HCT116 (cell line): ENCODE measurements at regions of chr2 and their contacts with region 1.

Region 1: DNA sequence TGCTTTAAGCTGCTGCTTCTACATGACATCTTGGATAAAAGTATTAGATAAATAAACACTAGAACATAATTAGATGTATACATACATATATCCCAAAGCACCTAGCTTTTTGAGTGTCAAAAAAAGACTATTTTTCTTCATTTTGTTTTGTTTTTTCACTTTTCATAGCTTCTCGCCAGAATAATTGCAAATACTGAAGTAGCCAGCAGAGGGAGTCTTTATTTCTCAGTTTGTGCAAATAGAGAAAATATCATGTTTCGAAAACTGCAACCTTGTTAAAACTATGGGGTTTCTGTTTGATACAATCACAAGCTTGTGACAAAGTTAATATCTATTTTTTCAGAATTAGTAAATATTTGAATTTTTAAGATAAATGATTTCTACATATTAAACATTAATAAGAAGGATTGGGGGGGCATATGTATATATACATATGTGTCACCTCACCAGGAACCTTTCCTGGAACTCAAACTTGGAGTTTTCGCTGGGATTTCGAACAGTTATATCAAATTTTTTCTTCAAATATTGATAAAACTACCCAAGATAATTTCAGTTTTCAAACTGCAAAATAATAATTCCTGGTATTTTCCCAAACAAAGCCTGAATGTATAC is 61.0 kb downstream of the GRB14 start:
- DNase-seq: peak; percentile 4
- ATAC-seq: no peak
- H3K4me3 ChIP-seq: no peak overlapping the region
- H3K27ac ChIP-seq: no peak overlapping the region
- H3K4me1 ChIP-seq: no peaks in the 10 kb centered on the region
- H3K27me3 ChIP-seq: no peaks in the 10 kb centered on the region
- CTCF ChIP-seq: peak; percentile 58 to 76 (median 75)
- POLR2A ChIP-seq: no peak
- RAD21 ChIP-seq: peak; percentile 47

Region 2: DNA sequence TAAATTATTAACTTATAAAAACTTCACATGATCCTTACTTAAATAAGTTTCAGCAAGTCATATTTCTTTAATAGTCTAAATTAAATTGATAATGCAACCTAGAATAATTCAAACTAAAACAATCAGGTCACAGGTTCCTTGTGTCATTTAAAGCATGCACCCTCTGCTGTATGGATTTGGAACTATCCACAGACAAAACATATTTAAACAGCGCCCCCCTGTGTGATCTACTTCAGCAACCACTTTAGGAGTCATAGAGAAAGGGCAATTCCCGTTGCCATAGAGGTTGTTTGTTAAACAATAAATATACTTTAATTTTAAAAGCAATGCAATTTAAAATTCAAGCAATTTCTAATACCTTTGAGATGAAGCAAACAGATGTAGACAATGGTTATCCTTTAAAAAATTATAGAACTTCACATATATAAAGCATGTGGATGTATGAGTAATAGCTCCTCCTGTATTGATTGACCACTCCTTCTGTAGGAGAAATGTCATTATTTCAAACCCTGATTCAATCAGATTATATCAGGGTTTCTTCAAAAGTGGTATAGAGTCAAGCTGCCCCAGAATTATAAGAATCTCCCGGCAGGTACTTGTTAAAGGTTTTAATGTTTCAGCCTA is 39.8 kb after region 1 on chr2:
- CTCF ChIA-PET with region 1: interaction called, 16 read pairs
- POLR2A ChIA-PET with region 1: no interaction called
- RAD21 ChIA-PET with region 1: no interaction called
- intact Hi-C with region 1: no loop called
- DNase-seq: peak; percentile 79
- ATAC-seq: peak; percentile 99
- H3K4me3 ChIP-seq: no peak overlapping the region
- H3K27ac ChIP-seq: no peak overlapping the region
- H3K4me1 ChIP-seq: no peaks in the 10 kb centered on the region
- H3K27me3 ChIP-seq: no peaks in the 10 kb centered on the region
- CTCF ChIP-seq: peak; percentile 87 to 99 (median 92)
- POLR2A ChIP-seq: no peak
- RAD21 ChIP-seq: peak; percentile 70

Region 3: DNA sequence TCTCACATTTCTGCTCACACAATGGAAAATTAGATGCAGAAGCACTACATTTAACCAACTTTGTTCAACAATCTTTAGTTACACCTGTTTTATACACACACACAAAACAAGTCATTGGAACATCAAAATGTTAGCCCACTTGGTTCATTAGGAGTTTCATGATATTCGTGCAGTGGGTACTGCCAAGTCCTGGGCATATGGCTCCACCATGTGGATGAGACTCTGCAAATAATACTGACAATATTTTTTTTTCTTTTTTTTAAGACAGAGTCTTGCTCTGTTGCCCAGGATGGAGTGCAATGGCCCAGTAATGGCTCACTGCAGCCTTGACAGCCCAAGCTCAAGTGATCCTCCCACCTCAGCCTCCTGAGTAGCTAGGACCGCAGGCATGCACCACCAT is 95.5 kb after region 1 on chr2:
- CTCF ChIA-PET with region 1: interaction called, 3 read pairs
- POLR2A ChIA-PET with region 1: no interaction called
- RAD21 ChIA-PET with region 1: no interaction called
- intact Hi-C with region 1: loop called (anchors 1 kb)
- DNase-seq: no peak
- ATAC-seq: peak; percentile 66
- H3K4me3 ChIP-seq: no peak overlapping the region
- H3K27ac ChIP-seq: no peak overlapping the region
- H3K4me1 ChIP-seq: no peaks in the 10 kb centered on the region; a peak in 1 of 4 replicates
- H3K27me3 ChIP-seq: no peaks in the 10 kb centered on the region
- CTCF ChIP-seq: peak in 2 of 3 experiments; percentile 13 to 26; a peak in 3 of 6 replicates
- POLR2A ChIP-seq: no peak
- RAD21 ChIP-seq: peak; percentile 56

Region 4: DNA sequence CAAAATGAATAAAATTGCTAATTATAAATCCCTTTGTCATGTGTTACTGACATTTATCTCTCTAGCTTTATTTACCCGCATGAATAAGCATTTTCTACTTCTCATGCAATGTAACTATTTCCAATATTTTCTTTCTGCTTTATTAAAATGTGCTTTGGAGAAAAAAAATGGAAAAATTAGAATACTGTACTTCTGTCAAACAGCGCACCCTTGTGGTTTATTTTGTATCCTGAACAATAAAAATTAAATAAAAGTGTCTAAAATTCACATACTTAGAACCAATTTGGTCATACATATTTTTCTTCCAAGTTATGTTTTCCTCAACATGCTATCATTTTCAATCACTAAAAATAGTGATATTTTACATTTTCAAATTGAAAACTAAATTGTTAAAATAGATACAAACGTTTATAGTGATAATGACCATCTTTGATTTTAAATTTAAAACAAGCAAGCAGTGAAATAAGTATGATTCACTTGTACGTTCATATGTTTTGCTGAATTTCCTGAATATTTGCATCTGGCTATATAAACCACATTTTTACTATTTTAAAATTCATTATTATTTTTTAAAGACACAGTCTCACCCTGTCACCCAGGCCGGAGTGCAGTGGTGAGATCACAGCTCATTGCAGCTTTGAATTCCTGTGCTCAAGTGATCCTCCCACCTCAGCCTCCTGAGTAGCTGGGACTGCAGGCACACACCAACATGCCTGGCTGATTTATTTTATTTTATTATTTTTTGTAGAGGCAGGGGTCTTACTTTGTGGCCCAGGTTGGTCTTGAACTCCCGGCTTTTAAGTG is 156.9 kb after region 1 on chr2:
- CTCF ChIA-PET with region 1: interaction called, 5 read pairs
- POLR2A ChIA-PET with region 1: no interaction called
- RAD21 ChIA-PET with region 1: no interaction called
- intact Hi-C with region 1: loop called (anchors 1 kb)
- DNase-seq: peak; percentile 10
- ATAC-seq: no peak
- H3K4me3 ChIP-seq: no peak overlapping the region
- H3K27ac ChIP-seq: no peak overlapping the region
- H3K4me1 ChIP-seq: no peaks in the 10 kb centered on the region
- H3K27me3 ChIP-seq: no peaks in the 10 kb centered on the region
- CTCF ChIP-seq: peak; percentile 45 to 76 (median 46); a peak in 4 of 6 replicates
- POLR2A ChIP-seq: no peak
- RAD21 ChIP-seq: peak; percentile 56